Activated CD8-positive, alpha-beta T cell treated with anti-CD3 and anti-CD28 coated beads, Interleukin-2, amount 10 ng/mL, durations not matched to agents 7 days and 5 days (primary cell): ENCODE measurements at regions of chr17 and their contacts with region 1.

Region 1: GRCh38 chr17:16353317-16354174 is at the start of gene CENPV:
- DNase-seq: peak; percentile 67
- ATAC-seq: peak; percentile 87
- H3K4me3 Mint-ChIP-seq: peak within 1 kb of the TSS; percentile 83
- H3K27ac Mint-ChIP-seq: peak within 1 kb of the TSS; percentile 79
- H3K4me1 Mint-ChIP-seq: peaks cover 25% of the 10 kb centered on the region
- H3K27me3 Mint-ChIP-seq: peaks cover 9% of the 10 kb centered on the region
- total RNA-seq, gene CENPV: 28.6 to 36.4 TPM

Region 2: GRCh38 chr17:16189791-16190348 is 163.7 kb before region 1 on chr17:
- CTCF ChIA-PET with region 1: no interaction called
- POLR2A ChIA-PET with region 1: no interaction called
- DNase-seq: no peak
- ATAC-seq: no peak
- H3K4me3 Mint-ChIP-seq: no peak overlapping the region
- H3K27ac Mint-ChIP-seq: no peak overlapping the region
- H3K4me1 Mint-ChIP-seq: peaks cover 8% of the 10 kb centered on the region
- H3K27me3 Mint-ChIP-seq: no peaks in the 10 kb centered on the region

Region 3: GRCh38 chr17:16342979-16343378 is 10.6 kb before region 1 on chr17:
- CTCF ChIA-PET with region 1: interaction called, 11 read pairs
- POLR2A ChIA-PET with region 1: interaction called, 5 read pairs
- DNase-seq: no peak
- ATAC-seq: no peak
- H3K4me3 Mint-ChIP-seq: no peak overlapping the region
- H3K27ac Mint-ChIP-seq: no peak overlapping the region
- H3K4me1 Mint-ChIP-seq: peaks cover 1% of the 10 kb centered on the region
- H3K27me3 Mint-ChIP-seq: no peaks in the 10 kb centered on the region